A549 (cell line): ENCODE measurements at regions of chr2 and their contacts with region 1.

Region 1: GRCh38 chr2:36461039-36461681 is 105.6 kb downstream of the CRIM1 start:
- DNase-seq: peak; percentile 28 to 82
- ATAC-seq: peak; percentile 72
- H3K4me3 ChIP-seq: no peak overlapping the region; the same call in 2 of the 3 replicates
- H3K27ac ChIP-seq: peak overlapping the region; percentile 80 to 87
- H3K4me1 ChIP-seq: peaks cover 91% of the 10 kb centered on the region
- CTCF ChIP-seq: no peak
- EP300 ChIP-seq: peak; percentile 45 to 76; a peak in 3 of 5 replicates
- POLR2A ChIP-seq: no peak
- RAD21 ChIP-seq: peak in 1 of 2 experiments; percentile 32; a peak in 1 of 5 replicates

Region 2: DNA sequence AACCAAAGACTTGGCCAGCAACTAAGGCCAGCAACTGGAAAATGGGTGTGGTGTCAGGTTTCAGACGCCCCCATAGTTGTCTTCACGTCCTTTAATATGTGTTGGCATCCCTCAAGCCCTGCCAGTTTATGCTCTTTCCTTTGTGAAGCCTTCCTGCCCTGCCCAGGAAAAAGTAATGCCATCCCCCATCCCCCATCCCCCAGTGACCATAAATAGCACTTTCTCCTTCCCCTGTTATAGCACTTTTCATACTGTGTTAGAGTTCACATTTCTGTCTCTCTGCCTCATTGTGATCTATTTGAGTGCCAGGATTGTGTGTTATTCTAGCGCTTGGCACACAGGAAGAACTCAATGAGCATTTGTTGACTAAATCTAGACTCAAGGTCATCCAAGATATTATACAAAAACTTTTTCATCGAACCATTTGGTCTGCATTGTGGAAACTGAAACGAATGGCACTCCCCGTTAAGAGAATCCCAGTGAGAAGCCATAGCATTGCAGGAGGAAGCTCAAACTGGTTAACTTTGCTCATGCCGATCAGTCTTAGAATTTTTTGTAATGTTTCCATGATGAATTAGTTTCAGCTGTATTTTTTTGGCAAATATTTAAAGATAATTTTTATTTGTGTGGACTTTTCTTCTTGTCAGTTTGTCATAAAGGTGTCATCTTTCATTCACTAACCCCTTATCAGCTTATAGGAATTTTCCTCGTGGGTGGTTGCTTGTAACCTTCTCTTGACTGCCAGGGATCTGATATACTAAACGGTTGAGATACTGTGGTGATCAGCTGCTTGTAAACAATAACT is 89.9 kb before region 1 on chr2:
- CTCF ChIA-PET with region 1: interaction called, 75 read pairs
- POLR2A ChIA-PET with region 1: interaction called, 4 read pairs
- DNase-seq: peak in 1 of 2 experiments; percentile 62
- ATAC-seq: peak in 1 of 2 experiments; percentile 16; a peak in 3 of 6 replicates
- H3K4me3 ChIP-seq: peak overlapping the region; percentile 25; the same call in 2 of the 3 replicates
- H3K27ac ChIP-seq: peak overlapping the region; percentile 75 to 88
- H3K4me1 ChIP-seq: peaks cover 100% of the 10 kb centered on the region
- CTCF ChIP-seq: no peak
- EP300 ChIP-seq: no peak
- POLR2A ChIP-seq: no peak
- RAD21 ChIP-seq: 0 out of 5 replicates have a peak, but pooled peaks of 1 of the 2 experiments have one; percentile 1

Region 3: GRCh38 chr2:36403675-36404230 is 57.4 kb before region 1 on chr2:
- CTCF ChIA-PET with region 1: interaction called, 18 read pairs
- POLR2A ChIA-PET with region 1: interaction called, 4 read pairs
- DNase-seq: peak; percentile 69 to 97
- ATAC-seq: peak; percentile 85 to 87
- H3K4me3 ChIP-seq: peak overlapping the region; percentile 30
- H3K27ac ChIP-seq: peak overlapping the region; percentile 88 to 92
- H3K4me1 ChIP-seq: peaks cover 98% of the 10 kb centered on the region
- CTCF ChIP-seq: no peak
- EP300 ChIP-seq: peak; percentile 97 to 98; a peak in 4 of 5 replicates
- POLR2A ChIP-seq: no peak
- RAD21 ChIP-seq: peak; percentile 20 to 57; a peak in 4 of 5 replicates

Region 4: GRCh38 chr2:36444216-36444936 is 16.8 kb before region 1 on chr2:
- CTCF ChIA-PET with region 1: interaction called, 53 read pairs
- POLR2A ChIA-PET with region 1: no interaction called
- DNase-seq: no peak
- ATAC-seq: peak in 1 of 2 experiments; percentile 12; a peak in 3 of 6 replicates
- H3K4me3 ChIP-seq: no peak overlapping the region
- H3K27ac ChIP-seq: peak overlapping the region in 1 of 2 experiments; percentile 35; a peak in 3 of 6 replicates
- H3K4me1 ChIP-seq: peaks cover 96% of the 10 kb centered on the region
- CTCF ChIP-seq: no peak
- EP300 ChIP-seq: no peak
- POLR2A ChIP-seq: no peak
- RAD21 ChIP-seq: no peak

Region 5: DNA sequence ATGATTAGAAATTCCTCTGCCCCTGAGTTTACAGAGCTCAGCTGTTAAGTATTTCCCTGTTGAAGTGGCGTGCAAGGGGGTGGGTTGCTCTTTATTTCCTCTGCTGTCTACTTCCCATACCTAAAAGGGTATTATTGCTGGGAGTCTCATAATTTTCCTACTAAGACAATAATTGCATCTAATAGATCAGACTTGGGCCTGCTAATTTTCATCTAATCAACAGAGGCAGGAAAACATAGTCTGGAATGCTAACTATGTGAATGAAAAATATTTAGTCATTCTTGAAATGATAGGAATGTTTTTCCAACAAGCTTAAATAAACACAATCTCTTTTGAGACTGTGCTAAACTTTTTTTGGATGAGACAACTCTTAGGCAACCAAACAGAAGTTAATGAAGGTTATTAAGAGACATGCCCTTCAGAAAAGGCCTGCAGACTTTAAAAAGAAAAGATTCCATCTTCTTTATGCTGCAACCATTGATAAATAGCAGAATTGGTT is 25.4 kb after region 1 on chr2:
- CTCF ChIA-PET with region 1: interaction called, 30 read pairs
- POLR2A ChIA-PET with region 1: no interaction called
- DNase-seq: peak in 1 of 2 experiments; percentile 55
- ATAC-seq: peak; percentile 39 to 43; a peak in 3 of 6 replicates
- H3K4me3 ChIP-seq: peak overlapping the region; percentile 5; the same call in 1 of the 3 replicates
- H3K27ac ChIP-seq: peak overlapping the region; percentile 84
- H3K4me1 ChIP-seq: peaks cover 100% of the 10 kb centered on the region
- CTCF ChIP-seq: no peak
- EP300 ChIP-seq: peak; percentile 78 to 81; a peak in 3 of 5 replicates
- POLR2A ChIP-seq: no peak
- RAD21 ChIP-seq: 0 out of 5 replicates have a peak, but pooled peaks of 1 of the 2 experiments have one; percentile 17

Region 6: GRCh38 chr2:36663851-36664695 is 202.9 kb after region 1 on chr2:
- CTCF ChIA-PET with region 1: interaction called, 12 read pairs
- POLR2A ChIA-PET with region 1: no interaction called
- DNase-seq: peak; percentile 55 to 85
- ATAC-seq: peak; percentile 96 to 97
- H3K4me3 ChIP-seq: no peak overlapping the region
- H3K27ac ChIP-seq: peak overlapping the region; percentile 35 to 68; a peak in 5 of 6 replicates
- H3K4me1 ChIP-seq: peaks cover 29% of the 10 kb centered on the region
- CTCF ChIP-seq: peak; percentile 98
- EP300 ChIP-seq: no peak
- POLR2A ChIP-seq: no peak
- RAD21 ChIP-seq: peak; percentile 98 to 99

Region 7: GRCh38 chr2:36741188-36741837 is 280.2 kb after region 1 on chr2:
- CTCF ChIA-PET with region 1: no interaction called
- POLR2A ChIA-PET with region 1: no interaction called
- DNase-seq: no peak
- ATAC-seq: 0 out of 6 replicates have a peak, but pooled peaks of 1 of the 2 experiments have one; percentile 36
- H3K4me3 ChIP-seq: no peak overlapping the region
- H3K27ac ChIP-seq: no peak overlapping the region
- H3K4me1 ChIP-seq: no peaks in the 10 kb centered on the region
- CTCF ChIP-seq: no peak
- EP300 ChIP-seq: no peak
- POLR2A ChIP-seq: no peak
- RAD21 ChIP-seq: no peak

Region 8: GRCh38 chr2:37189452-37190153 is 728.4 kb after region 1 on chr2:
- CTCF ChIA-PET with region 1: no interaction called
- POLR2A ChIA-PET with region 1: no interaction called
- DNase-seq: peak; percentile 64 to 85
- ATAC-seq: peak; percentile 91 to 94
- H3K4me3 ChIP-seq: no peak overlapping the region
- H3K27ac ChIP-seq: peak overlapping the region; percentile 41 to 66; a peak in 5 of 6 replicates
- H3K4me1 ChIP-seq: peaks cover 16% of the 10 kb centered on the region
- CTCF ChIP-seq: no peak
- EP300 ChIP-seq: no peak
- POLR2A ChIP-seq: no peak
- RAD21 ChIP-seq: no peak